ENCODE measurements at regions of chr10 and their contacts with region 1.

Region 1: DNA sequence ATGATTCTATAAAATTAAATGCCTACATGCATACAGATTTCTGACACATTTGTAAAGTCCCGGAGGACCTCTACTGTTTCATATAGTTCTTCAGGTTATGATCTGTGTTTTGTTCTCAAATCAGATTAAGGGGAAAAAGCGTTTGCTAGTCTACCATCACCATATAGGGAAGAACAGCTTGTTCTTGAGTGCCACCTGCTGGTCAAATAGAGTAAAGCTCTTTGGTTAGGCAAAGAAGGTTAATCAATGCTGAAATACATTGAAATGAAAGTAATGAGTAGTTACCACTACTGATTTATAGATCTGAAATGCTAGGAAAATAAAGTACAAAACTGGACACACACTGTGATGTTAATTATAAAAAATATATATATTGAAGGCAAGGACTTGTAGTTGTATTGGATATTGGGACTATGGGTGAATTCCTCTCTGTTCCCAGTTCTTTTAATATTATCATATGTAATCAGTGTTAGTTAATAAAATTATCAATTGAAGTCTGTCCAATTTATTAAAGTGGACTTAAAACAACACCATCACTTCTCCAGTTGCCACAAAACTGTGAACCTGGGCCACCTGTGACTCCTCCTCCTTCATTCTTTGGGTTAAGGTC is 72.6 kb upstream of the PDLIM1 start:
- DNase-seq: peak in 2 of 10 donors; percentile 23 to 40

Region 2: DNA sequence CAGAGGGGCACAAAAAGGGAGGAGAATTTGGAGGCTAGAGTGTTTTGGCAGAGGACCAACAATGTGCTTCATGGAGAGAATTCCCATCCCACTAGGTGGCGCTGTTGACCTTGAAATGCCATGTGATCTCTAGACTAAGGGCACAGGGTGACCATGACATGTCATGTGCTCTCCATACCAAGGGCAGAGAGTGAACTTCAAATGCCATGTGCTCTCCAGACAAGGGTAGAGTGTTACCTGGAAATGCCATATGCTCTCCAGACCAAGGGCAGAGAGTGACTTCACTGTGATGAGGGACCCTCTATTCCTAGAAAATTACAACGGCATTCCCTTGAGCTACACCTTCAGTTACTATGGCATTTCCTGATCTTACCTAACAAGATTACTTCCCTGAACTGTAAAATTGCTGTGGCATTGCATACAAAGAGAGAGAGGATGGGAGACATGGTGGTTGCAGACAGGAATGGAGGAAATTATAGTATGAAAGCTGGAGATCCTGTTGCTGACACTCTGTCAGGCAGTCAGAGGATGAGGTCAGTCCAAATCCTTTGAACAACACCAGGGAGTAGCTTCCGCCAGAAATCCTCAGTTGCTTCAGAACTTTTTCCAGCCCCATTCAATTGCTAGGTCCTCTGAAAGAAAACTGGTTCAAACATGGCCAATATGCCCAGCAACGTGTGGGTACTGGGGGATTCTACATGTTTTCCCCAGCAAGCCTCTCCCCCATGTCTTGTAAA is 230.2 kb before region 1 on chr10:
- intact Hi-C with region 1: loop called (anchors 5 kb)
- DNase-seq: peak in 5 of 10 donors; percentile 19 to 57 (median 34)

Region 3: DNA sequence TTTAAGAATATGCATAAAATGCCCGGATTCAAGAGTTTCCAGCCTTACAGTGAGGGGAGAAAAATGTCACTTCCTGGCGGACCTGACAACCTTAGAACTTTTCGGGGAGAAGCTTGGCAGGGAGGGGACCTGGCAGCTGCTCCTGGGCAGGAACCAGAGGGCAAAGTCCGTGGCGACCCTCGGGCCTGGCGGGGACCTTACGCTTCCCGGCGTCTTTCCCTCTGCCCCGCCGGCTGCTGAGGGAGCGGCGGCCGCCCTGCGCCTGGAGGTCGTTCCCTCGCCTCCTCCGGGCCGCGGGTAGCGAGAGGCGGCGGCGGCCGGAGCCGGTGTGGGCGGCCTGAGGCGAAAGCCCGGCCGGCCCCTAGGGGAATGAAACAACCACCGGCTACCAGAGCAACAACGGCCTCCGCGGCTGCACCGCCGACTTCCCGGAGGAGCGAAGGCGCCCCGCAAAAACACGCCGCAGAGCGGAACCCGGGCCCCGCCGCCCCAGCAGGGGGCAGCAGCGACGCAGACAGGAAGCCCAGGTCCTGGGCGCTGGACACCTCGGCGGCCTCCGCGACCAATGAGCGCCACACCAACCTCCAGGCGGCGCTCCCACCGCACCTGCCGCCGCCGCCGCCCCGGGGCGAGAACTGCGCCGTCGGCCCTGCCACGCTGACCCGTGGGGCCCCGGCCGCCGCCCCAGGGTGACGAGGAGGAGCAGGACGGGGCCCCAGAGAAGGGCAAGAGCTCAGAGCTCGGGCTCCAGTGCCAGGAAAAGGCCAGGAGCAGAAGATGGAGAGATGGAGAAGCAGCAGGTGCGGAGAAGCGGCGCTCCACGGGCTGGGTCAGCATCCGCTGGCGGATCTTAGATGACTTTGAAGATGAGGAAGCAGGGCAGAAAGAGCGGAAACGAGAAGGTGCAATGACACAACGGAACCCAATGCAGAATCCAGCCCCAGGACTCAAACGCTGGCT is 179.9 kb before region 1 on chr10:
- intact Hi-C with region 1: loop called (anchors 5 kb)
- DNase-seq: peak; percentile 59 to 96 (median 76)

Region 4: DNA sequence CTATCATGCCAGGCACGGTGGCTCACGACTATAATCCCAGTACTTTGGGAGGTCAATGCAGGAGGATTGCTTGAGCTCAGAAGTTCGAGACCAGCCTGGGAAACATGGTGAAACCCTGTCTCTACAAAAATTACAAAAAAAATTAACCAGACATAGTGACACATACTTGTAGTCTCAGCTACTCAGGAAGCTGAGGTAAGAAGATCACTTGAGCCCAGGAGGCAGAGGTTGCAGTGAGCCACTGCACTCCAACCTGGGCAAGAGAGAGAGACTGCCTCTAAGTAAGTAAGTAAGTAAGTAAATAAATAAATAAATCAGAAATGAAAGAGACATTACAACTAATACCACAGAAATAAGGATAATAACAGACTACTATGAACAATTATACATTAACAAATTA is 108.8 kb before region 1 on chr10:
- intact Hi-C with region 1: no loop called
- DNase-seq: no peak

Measured in posterior cingulate gyrus (tissue), 11 donors.